IMR-90 (cell line): ENCODE measurements at regions of chrX and their contacts with region 1.

Region 1: GRCh38 chrX:104343428-104344129 is 88.8 kb upstream of the ESX1 start:
- DNase-seq: peak; percentile 74
- ATAC-seq: peak; percentile 88
- H3K4me3 ChIP-seq: no peak overlapping the region
- H3K27ac ChIP-seq: no peak overlapping the region
- H3K4me1 ChIP-seq: no peaks in the 10 kb centered on the region
- H3K27me3 ChIP-seq: peaks cover 12% of the 10 kb centered on the region
- CTCF ChIP-seq: peak; percentile 69
- POLR2A ChIP-seq: no peak
- RAD21 ChIP-seq: peak; percentile 70

Region 2: GRCh38 chrX:104205548-104205947 is 138.0 kb before region 1 on chrX:
- CTCF ChIA-PET with region 1: no interaction called
- POLR2A ChIA-PET with region 1: no interaction called
- dilution Hi-C with region 1: no loop called
- in situ Hi-C with region 1: no loop called
- intact Hi-C with region 1: no loop called
- DNase-seq: no peak
- ATAC-seq: no peak
- H3K4me3 ChIP-seq: no peak overlapping the region
- H3K27ac ChIP-seq: no peak overlapping the region
- H3K4me1 ChIP-seq: no peaks in the 10 kb centered on the region
- H3K27me3 ChIP-seq: peaks cover 4% of the 10 kb centered on the region; the same call in 1 of the 2 replicates
- CTCF ChIP-seq: no peak
- POLR2A ChIP-seq: no peak
- RAD21 ChIP-seq: no peak

Region 3: DNA sequence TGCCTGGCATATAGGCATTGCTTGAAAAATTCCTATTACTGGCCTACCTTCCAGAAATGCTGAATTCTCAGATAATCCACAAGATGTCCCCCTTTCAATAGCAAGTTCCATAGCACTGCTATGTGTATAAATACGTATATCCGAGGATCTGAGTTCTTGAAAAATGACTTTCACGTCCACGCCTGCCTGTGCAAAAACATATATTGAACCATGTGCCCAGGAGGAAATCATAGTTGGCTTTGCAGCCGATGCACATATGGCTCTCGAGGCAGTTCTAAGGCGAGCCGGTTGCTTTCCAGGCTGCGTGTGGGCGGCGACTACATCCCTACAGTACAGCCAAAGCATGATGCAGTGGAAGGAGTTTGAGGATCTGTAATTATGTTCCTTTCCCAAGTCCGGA is 33.5 kb before region 1 on chrX:
- CTCF ChIA-PET with region 1: interaction called, 3 read pairs
- POLR2A ChIA-PET with region 1: no interaction called
- dilution Hi-C with region 1: no loop called
- in situ Hi-C with region 1: no loop called
- intact Hi-C with region 1: loop called (anchors 1 kb)
- DNase-seq: peak; percentile 47
- ATAC-seq: peak; percentile 82
- H3K4me3 ChIP-seq: peak overlapping the region; percentile 35
- H3K27ac ChIP-seq: no peak overlapping the region
- H3K4me1 ChIP-seq: no peaks in the 10 kb centered on the region
- H3K27me3 ChIP-seq: peaks cover 2% of the 10 kb centered on the region; the same call in 1 of the 2 replicates
- CTCF ChIP-seq: peak; percentile 61
- POLR2A ChIP-seq: no peak
- RAD21 ChIP-seq: peak; percentile 74